A673 (cell line): ENCODE measurements at regions of chr6 and their contacts with region 1.

Region 1: GRCh38 chr6:6724539-6725467 is 136.3 kb downstream of the LY86 start:
- DNase-seq: peak; percentile 94
- H3K4me3 ChIP-seq: peak overlapping the region; percentile 29
- H3K27ac ChIP-seq: peak overlapping the region; percentile 87
- H3K4me1 ChIP-seq: peaks cover 54% of the 10 kb centered on the region
- H3K27me3 ChIP-seq: no peaks in the 10 kb centered on the region
- CTCF ChIP-seq: peak; percentile 90

Region 2: GRCh38 chr6:6479785-6480184 is 245.0 kb before region 1 on chr6:
- CTCF ChIA-PET with region 1: no interaction called
- POLR2A ChIA-PET with region 1: no interaction called
- intact Hi-C with region 1: no loop called
- DNase-seq: no peak
- H3K4me3 ChIP-seq: no peak overlapping the region
- H3K27ac ChIP-seq: no peak overlapping the region
- H3K4me1 ChIP-seq: no peaks in the 10 kb centered on the region
- H3K27me3 ChIP-seq: peaks cover 24% of the 10 kb centered on the region
- CTCF ChIP-seq: no peak

Region 3: GRCh38 chr6:6676910-6677441 is 47.8 kb before region 1 on chr6:
- CTCF ChIA-PET with region 1: no interaction called
- POLR2A ChIA-PET with region 1: interaction called, 3 read pairs
- intact Hi-C with region 1: loop called (anchors 1 kb)
- DNase-seq: peak; percentile 91
- H3K4me3 ChIP-seq: no peak overlapping the region
- H3K27ac ChIP-seq: peak overlapping the region; percentile 55
- H3K4me1 ChIP-seq: peaks cover 30% of the 10 kb centered on the region
- H3K27me3 ChIP-seq: no peaks in the 10 kb centered on the region
- CTCF ChIP-seq: peak; percentile 99

Region 4: GRCh38 chr6:6834356-6835222 is 109.8 kb after region 1 on chr6:
- CTCF ChIA-PET with region 1: no interaction called
- POLR2A ChIA-PET with region 1: no interaction called
- intact Hi-C with region 1: loop called (anchors 2 kb)
- DNase-seq: no peak
- H3K4me3 ChIP-seq: no peak overlapping the region
- H3K27ac ChIP-seq: peak overlapping the region; percentile 93
- H3K4me1 ChIP-seq: peaks cover 45% of the 10 kb centered on the region
- H3K27me3 ChIP-seq: no peaks in the 10 kb centered on the region
- CTCF ChIP-seq: no peak

Region 5: GRCh38 chr6:8627085-8627861 is 1902.5 kb after region 1 on chr6:
- CTCF ChIA-PET with region 1: no interaction called
- POLR2A ChIA-PET with region 1: no interaction called
- intact Hi-C with region 1: no loop called
- DNase-seq: peak; percentile 9
- H3K4me3 ChIP-seq: no peak overlapping the region
- H3K27ac ChIP-seq: no peak overlapping the region
- H3K4me1 ChIP-seq: peaks cover 5% of the 10 kb centered on the region
- H3K27me3 ChIP-seq: no peaks in the 10 kb centered on the region
- CTCF ChIP-seq: no peak